HepG2 (cell line): ENCODE measurements at regions of chr18 and their contacts with region 1.

Region 1: DNA sequence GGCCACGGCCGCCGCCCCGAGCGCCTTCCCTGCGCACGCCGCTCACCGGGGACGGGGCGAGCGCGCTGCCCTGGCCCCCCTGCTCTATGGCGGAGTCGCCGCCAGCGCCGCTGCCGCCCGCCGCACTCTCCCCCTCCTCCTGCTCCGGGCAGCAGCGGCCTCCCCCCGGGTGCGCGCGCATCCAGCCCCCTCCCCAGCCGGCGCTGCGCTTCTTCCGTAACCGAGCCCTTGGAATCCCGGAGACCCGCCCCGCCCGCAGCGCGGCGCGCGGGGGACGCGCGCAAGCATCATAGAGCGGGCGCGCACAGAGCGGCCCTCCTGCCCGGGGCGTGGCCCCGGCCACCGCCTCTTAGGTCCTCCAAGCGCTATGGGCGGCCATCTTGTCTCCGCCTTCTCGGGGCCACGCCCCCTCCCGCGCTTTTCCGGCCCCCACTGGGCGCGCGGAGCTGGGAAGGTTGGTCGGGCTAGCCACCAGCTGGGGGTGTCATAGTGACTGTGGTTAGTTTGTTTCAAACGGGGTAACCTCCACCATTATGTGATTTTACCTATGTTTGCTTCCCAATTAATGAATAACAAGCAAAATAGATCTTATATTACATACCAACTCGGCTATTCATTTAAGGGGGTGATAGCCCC is at the start of gene MBD2:
- DNase-seq: peak; percentile 93
- ATAC-seq: peak; percentile 98
- H3K4me3 ChIP-seq: peak within 1 kb of the TSS; percentile 63 to 76 (median 72)
- H3K27ac ChIP-seq: peak within 1 kb of the TSS; percentile 51
- H3K4me1 ChIP-seq: peaks cover 59% of the 10 kb centered on the region
- H3K27me3 ChIP-seq: no peaks in the 10 kb centered on the region
- CTCF ChIP-seq: peak; percentile 76
- EP300 ChIP-seq: no peak
- POLR2A ChIP-seq: peak; percentile 19 to 62; a peak in 2 of 4 replicates
- RAD21 ChIP-seq: no peak
- total RNA-seq, gene MBD2: 38.5 and 48.6 TPM in 2 replicates

Region 2: DNA sequence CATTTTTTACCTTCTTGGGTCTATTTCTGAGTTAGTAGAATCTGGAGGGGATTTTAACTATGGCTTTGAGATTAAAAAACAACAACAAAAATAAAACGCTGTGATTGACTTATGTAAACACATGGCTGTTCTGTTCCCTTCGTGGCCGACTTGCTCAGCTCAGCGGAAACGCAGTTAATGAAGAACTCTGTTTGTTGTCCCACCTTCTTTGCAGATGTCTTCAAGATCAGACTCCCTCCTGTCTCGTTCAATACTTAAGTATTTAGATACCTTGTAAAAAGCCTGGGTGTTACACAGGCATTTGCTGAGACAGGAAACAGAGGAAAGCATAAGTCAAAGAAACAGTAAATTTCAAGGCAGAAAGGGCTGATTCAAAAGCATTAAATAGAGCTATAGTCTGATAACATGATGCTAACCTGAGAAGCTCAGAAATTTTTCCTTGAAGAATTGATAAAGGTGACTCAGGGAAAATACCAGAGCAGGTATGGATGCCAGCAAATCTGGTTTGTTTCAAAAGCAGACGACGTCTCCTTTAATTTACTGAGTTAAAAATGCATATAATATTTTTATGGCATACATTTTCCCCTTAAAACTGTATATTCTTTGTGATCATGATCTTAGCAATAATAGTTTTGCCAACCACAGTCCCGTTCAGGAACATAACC is 23.1 kb after region 1 on chr18:
- CTCF ChIA-PET with region 1: no interaction called
- POLR2A ChIA-PET with region 1: interaction called, 4 read pairs
- in situ Hi-C with region 1: no loop called
- intact Hi-C with region 1: loop called (anchors 2 kb)
- DNase-seq: no peak
- ATAC-seq: no peak
- H3K4me3 ChIP-seq: peak overlapping the region; percentile 39 to 48 (median 44); a peak in 5 of 6 replicates
- H3K27ac ChIP-seq: no peak overlapping the region
- H3K4me1 ChIP-seq: peaks cover 47% of the 10 kb centered on the region
- H3K27me3 ChIP-seq: no peaks in the 10 kb centered on the region
- CTCF ChIP-seq: no peak
- EP300 ChIP-seq: no peak
- POLR2A ChIP-seq: no peak
- RAD21 ChIP-seq: no peak

Region 3: GRCh38 chr18:54254265-54254770 is 29.8 kb after region 1 on chr18:
- CTCF ChIA-PET with region 1: no interaction called
- POLR2A ChIA-PET with region 1: interaction called, 21 read pairs
- in situ Hi-C with region 1: no loop called
- intact Hi-C with region 1: loop called (anchors 2 kb)
- DNase-seq: peak; percentile 98
- ATAC-seq: peak; percentile 98
- H3K4me3 ChIP-seq: peak overlapping the region; percentile 23 to 51 (median 47); a peak in 4 of 6 replicates
- H3K27ac ChIP-seq: peak overlapping the region; percentile 89
- H3K4me1 ChIP-seq: peaks cover 76% of the 10 kb centered on the region
- H3K27me3 ChIP-seq: no peaks in the 10 kb centered on the region; a peak in 1 of 5 replicates
- CTCF ChIP-seq: no peak
- EP300 ChIP-seq: peak; percentile 66 to 78; a peak in 3 of 4 replicates
- POLR2A ChIP-seq: peak in 1 of 2 experiments; percentile 81; a peak in 2 of 4 replicates
- RAD21 ChIP-seq: no peak

Region 4: GRCh38 chr18:54269893-54270844 is 45.7 kb after region 1 on chr18:
- CTCF ChIA-PET with region 1: interaction called, 9 read pairs
- POLR2A ChIA-PET with region 1: interaction called, 17 read pairs
- in situ Hi-C with region 1: loop called (anchors 10 kb)
- intact Hi-C with region 1: loop called (anchors 1 kb)
- DNase-seq: peak; percentile 35
- ATAC-seq: peak; percentile 81
- H3K4me3 ChIP-seq: peak overlapping the region; percentile 84 to 95 (median 88)
- H3K27ac ChIP-seq: peak overlapping the region; percentile 68
- H3K4me1 ChIP-seq: peaks cover 19% of the 10 kb centered on the region
- H3K27me3 ChIP-seq: no peaks in the 10 kb centered on the region
- CTCF ChIP-seq: peak; percentile 61
- EP300 ChIP-seq: no peak
- POLR2A ChIP-seq: no peak; a peak in 1 of 4 replicates
- RAD21 ChIP-seq: peak; percentile 51

Region 5: GRCh38 chr18:54357660-54358494 is 133.4 kb after region 1 on chr18 and contains the starts of genes C18orf54 and STARD6:
- CTCF ChIA-PET with region 1: no interaction called
- POLR2A ChIA-PET with region 1: no interaction called
- in situ Hi-C with region 1: no loop called
- intact Hi-C with region 1: loop called (anchors 2 kb)
- DNase-seq: peak; percentile 87
- ATAC-seq: peak; percentile 95
- H3K4me3 ChIP-seq: peak within 1 kb of the TSS; percentile 92 to 99 (median 97)
- H3K27ac ChIP-seq: peak within 1 kb of the TSS; percentile 70
- H3K4me1 ChIP-seq: peaks cover 28% of the 10 kb centered on the region
- H3K27me3 ChIP-seq: no peaks in the 10 kb centered on the region; a peak in 2 of 5 replicates
- CTCF ChIP-seq: peak; percentile 86
- EP300 ChIP-seq: no peak
- POLR2A ChIP-seq: peak in 1 of 2 experiments; percentile 70; a peak in 2 of 4 replicates
- RAD21 ChIP-seq: 0 out of 2 replicates have a peak, but pooled peaks have one; percentile 27
- total RNA-seq, gene C18orf54: 2.5 and 8.1 TPM in 2 replicates
- total RNA-seq, gene STARD6: not detected in 2 replicates